PC-9 (cell line): ENCODE measurements at regions of chr6 and their contacts with region 1.

Region 1: DNA sequence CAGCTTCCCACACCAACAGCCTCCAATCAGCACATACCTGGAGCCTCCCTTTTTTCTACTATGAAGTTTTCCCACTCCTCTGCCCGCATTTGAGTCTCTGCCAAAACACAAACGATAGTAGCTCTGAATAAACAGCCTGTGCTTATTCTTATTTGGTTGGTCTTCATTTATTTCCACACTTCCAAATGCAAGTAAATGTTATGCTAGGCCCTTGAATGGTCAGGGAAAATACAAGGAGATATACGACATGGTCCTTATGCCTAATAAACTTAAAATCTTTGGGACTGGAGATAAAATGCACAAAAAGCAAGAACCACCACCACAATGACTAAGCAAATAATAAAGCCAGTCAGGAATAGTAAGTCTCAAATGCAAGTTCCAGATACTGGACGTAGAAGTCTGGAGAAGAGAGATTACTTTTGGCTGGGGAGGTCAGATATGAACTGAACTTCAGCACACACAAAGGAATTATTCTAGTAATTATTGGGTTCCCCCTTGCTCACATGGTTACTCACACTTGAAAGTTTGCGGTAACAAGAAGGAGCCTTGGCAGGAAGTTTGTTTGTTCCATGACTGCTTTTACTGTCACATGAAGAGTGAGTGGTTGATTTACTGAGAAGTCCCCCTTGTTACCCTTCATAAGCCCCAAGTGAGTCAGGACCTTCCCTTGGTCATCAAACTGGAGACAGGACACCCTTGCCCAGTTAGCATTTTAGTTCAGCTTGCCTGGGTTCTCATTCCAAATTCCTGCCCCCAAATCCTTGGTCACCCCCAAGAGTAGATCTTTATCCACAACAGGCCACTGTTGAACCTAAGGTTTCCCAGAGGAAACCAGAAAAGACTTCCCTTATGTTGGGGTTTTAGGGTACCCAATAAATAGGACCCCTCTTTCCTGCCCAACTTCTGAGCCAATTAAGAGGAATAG is 511.2 kb upstream of the JARID2 start:
- DNase-seq: peak in 1 of 2 experiments; percentile 37
- H3K4me3 ChIP-seq: no peak overlapping the region; the same call in 1 of the 2 replicates
- H3K27ac ChIP-seq: peak overlapping the region; percentile 99
- H3K4me1 ChIP-seq: peaks cover 53% of the 10 kb centered on the region
- H3K27me3 ChIP-seq: no peaks in the 10 kb centered on the region
- CTCF ChIP-seq: no peak

Region 2: GRCh38 chr6:14286144-14286543 is 448.5 kb before region 1 on chr6:
- CTCF ChIA-PET with region 1: no interaction called
- POLR2A ChIA-PET with region 1: no interaction called
- intact Hi-C with region 1: loop called (anchors 1 kb)
- DNase-seq: peak; percentile 41 to 54
- H3K4me3 ChIP-seq: no peak overlapping the region
- H3K27ac ChIP-seq: no peak overlapping the region
- H3K4me1 ChIP-seq: peaks cover 7% of the 10 kb centered on the region; the same call in 1 of the 2 replicates
- H3K27me3 ChIP-seq: no peaks in the 10 kb centered on the region
- CTCF ChIP-seq: no peak

Region 3: DNA sequence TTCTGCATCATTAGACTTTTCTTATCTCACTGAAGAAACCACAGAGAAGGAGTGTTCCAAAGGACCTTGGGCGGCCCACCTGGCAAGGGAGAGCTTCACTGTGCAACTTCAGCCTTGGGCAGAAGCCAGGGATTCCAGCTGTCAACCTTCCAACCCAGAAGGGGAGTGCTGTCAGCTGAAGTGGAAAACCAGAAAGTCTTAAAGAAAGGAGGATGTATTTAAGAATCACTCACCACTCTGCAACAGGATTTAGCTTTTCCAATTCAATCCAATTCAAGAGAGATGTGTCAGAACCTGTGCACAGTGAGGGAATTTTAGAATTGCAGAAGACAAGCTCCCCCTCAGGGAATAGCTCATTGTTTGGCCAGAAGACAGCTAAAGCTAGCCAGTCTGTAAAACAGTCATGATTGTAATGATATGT is 63.4 kb before region 1 on chr6:
- CTCF ChIA-PET with region 1: interaction called, 3 read pairs
- POLR2A ChIA-PET with region 1: no interaction called
- intact Hi-C with region 1: loop called (anchors 1 kb)
- DNase-seq: peak; percentile 78 to 83
- H3K4me3 ChIP-seq: no peak overlapping the region
- H3K27ac ChIP-seq: no peak overlapping the region
- H3K4me1 ChIP-seq: peaks cover 17% of the 10 kb centered on the region
- H3K27me3 ChIP-seq: no peaks in the 10 kb centered on the region
- CTCF ChIP-seq: no peak

Region 4: DNA sequence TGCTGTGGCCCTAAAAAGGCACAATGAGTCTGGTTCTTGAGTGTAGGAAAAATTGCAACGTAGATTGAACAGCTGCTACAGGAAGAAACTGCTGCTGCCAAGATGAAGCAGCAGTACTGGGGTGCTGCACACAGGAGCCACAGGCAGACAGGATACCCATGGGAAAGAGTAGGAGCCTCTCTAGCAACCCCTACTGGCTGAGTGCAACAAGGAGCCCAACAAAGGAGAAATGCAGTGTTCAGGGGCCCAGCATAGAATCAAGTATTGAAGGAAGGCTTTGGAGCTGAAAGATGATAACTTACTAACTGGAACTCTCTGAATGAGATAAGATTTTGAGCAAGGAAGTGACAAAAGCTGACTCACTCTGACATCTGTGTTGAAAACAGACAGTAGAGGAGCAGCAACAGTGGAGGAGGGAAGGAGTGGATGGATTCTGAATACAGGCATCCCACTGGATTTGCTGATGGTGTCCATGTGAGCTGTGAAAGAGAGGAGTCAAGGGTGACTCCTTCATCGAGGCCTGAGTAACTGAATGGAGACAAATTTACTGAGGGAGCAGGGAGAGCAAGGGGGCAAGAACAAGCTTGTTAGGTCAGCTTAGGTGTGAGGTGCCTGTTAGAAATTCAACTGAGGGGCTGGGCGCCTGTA is 23.5 kb before region 1 on chr6:
- CTCF ChIA-PET with region 1: no interaction called
- POLR2A ChIA-PET with region 1: interaction called, 4 read pairs
- intact Hi-C with region 1: loop called (anchors 1 kb)
- DNase-seq: peak; percentile 72 to 82
- H3K4me3 ChIP-seq: no peak overlapping the region
- H3K27ac ChIP-seq: peak overlapping the region; percentile 91
- H3K4me1 ChIP-seq: peaks cover 50% of the 10 kb centered on the region
- H3K27me3 ChIP-seq: no peaks in the 10 kb centered on the region
- CTCF ChIP-seq: peak; percentile 66

Region 5: GRCh38 chr6:14776307-14776706 is 41.6 kb after region 1 on chr6:
- CTCF ChIA-PET with region 1: no interaction called
- POLR2A ChIA-PET with region 1: no interaction called
- intact Hi-C with region 1: loop called (anchors 2 kb)
- DNase-seq: peak in 1 of 2 experiments; percentile 9
- H3K4me3 ChIP-seq: no peak overlapping the region
- H3K27ac ChIP-seq: no peak overlapping the region
- H3K4me1 ChIP-seq: 0 out of 2 replicates have a peak, but pooled peaks cover 3% of the 10 kb centered on the region
- H3K27me3 ChIP-seq: no peaks in the 10 kb centered on the region
- CTCF ChIP-seq: no peak

Region 6: GRCh38 chr6:14876778-14877613 is 142.3 kb after region 1 on chr6:
- CTCF ChIA-PET with region 1: no interaction called
- POLR2A ChIA-PET with region 1: no interaction called
- intact Hi-C with region 1: loop called (anchors 1 kb)
- DNase-seq: peak; percentile 30 to 73
- H3K4me3 ChIP-seq: no peak overlapping the region
- H3K27ac ChIP-seq: peak overlapping the region; percentile 78
- H3K4me1 ChIP-seq: peaks cover 28% of the 10 kb centered on the region
- H3K27me3 ChIP-seq: no peaks in the 10 kb centered on the region
- CTCF ChIP-seq: no peak